ENCODE measurements at regions of chr13 and their contacts with region 1.

Region 1: GRCh38 chr13:106882201-106882600 is 314.3 kb upstream of the ARGLU1 start:
- DNase-seq: no peak
- H3K4me3 ChIP-seq: no peak overlapping the region
- H3K27ac ChIP-seq: peak overlapping the region; percentile 64 to 67
- H3K4me1 ChIP-seq: peaks cover 0 to 33% (median 9%) of the 10 kb centered on the region in 4 donors
- H3K27me3 ChIP-seq: no peaks in the 10 kb centered on the region
- CTCF ChIP-seq: no peak

Region 2: DNA sequence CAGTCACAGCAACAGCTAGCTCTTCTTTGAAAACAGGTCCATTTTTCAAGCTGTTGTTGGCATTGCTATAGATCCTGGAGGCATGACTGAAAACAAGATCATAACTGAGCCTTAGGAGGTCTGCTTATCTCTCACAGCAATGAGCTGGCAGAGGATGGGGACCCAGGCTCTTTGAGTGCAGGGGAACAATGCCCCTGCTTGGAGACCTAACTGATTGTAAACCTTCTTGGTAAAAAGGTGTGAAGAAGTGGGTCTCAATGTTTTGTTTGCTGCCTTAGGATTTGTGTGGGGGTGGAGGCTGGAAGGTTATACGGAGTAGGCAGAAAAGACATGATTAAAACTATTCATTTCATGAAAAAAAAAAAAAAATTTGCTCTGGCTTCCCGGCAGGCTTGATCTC is 441.3 kb before region 1 on chr13:
- intact Hi-C with region 1: no loop called
- DNase-seq: no peak
- H3K4me3 ChIP-seq: no peak overlapping the region
- H3K27ac ChIP-seq: no peak overlapping the region
- H3K4me1 ChIP-seq: no peaks in the 10 kb centered on the region
- H3K27me3 ChIP-seq: no peaks in the 10 kb centered on the region
- CTCF ChIP-seq: no peak

Region 3: GRCh38 chr13:106867249-106867648 is 15.0 kb before region 1 on chr13:
- intact Hi-C with region 1: loop called (anchors 1 kb)
- DNase-seq: no peak
- H3K4me3 ChIP-seq: peak overlapping the region; percentile 3 to 32
- H3K27ac ChIP-seq: no peak overlapping the region
- H3K4me1 ChIP-seq: peaks cover 0 to 8% (median 3%) of the 10 kb centered on the region in 4 donors
- H3K27me3 ChIP-seq: no peaks in the 10 kb centered on the region
- CTCF ChIP-seq: peak; percentile 24 to 32

Region 4: GRCh38 chr13:108200781-108201398 is 1318.7 kb after region 1 on chr13:
- intact Hi-C with region 1: no loop called
- DNase-seq: no peak
- H3K4me3 ChIP-seq: no peak overlapping the region
- H3K27ac ChIP-seq: no peak overlapping the region
- H3K4me1 ChIP-seq: no peaks in the 10 kb centered on the region
- H3K27me3 ChIP-seq: no peaks in the 10 kb centered on the region
- CTCF ChIP-seq: no peak

Measured in tibial artery (tissue), 4 donors.